ENCODE measurements at regions of chr9 and their contacts with region 1.

Region 1: DNA sequence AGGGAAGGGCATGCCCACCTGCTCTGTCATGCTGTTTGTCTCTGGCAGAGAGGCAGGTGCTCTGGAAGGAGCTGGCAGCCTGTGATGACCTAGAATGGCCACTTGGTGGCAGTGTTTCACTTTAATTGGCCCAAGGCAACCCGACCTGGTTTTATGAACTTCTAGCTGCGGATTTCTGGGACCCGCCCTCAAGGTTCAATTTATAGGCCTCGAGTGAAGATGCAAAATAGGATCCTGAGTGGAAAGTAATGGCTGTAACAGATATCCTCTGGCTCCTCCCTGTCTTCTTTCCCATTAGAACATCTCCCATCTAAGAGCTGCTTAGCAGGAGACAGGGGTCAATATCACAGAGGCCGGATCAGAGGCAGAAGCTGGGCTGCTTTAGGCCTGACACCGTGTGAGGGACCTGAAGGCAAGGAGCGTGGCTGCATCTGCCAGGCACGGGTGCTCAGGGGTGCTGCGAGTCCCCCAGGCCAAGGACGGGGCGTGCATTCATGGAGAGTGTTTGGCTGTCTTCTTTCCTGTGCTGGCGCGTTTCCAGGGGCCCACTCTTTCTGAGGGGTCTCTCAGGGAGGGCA is 56.7 kb upstream of the SLC28A3 start:
- DNase-seq: peak; percentile 69 to 74
- H3K4me3 ChIP-seq: no peak overlapping the region
- H3K27ac ChIP-seq: no peak overlapping the region
- H3K4me1 ChIP-seq: no peaks in the 10 kb centered on the region
- H3K27me3 ChIP-seq: no peaks in the 10 kb centered on the region
- CTCF ChIP-seq: peak; percentile 73 to 94 (median 89)
- POLR2A ChIP-seq: no peak

Region 2: DNA sequence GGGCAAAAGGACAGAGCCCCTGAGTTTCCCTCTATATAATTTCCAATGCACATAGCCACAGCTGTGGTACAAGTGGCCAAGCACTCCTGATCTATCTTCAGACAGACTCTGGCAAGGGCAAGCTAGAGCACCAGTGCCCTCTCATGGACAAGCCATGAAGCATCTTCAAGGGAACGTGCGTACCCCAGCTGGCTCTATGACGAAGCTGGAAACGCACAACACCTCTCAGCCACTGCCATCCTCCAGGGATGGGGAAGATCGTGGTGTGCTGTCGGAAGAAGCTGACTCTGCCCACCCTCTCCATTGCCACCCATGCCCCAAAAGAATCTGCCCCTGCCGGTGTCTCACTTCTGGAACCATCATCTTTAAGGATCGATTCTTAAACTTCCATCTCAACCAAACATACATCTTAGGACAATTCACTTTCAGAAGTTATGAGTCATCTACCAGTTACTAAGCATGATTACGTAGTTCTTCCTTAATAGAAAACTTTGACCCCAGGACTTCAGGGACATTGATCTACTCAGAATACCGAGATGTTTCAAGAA is 861.7 kb after region 1 on chr9:
- intact Hi-C with region 1: loop called (anchors 5 kb)
- DNase-seq: peak; percentile 57 to 69
- H3K4me3 ChIP-seq: no peak overlapping the region
- H3K27ac ChIP-seq: no peak overlapping the region
- H3K4me1 ChIP-seq: no peaks in the 10 kb centered on the region
- H3K27me3 ChIP-seq: no peaks in the 10 kb centered on the region
- CTCF ChIP-seq: peak in 5 of 6 experiments; percentile 14 to 77 (median 70)
- POLR2A ChIP-seq: no peak

Region 3: DNA sequence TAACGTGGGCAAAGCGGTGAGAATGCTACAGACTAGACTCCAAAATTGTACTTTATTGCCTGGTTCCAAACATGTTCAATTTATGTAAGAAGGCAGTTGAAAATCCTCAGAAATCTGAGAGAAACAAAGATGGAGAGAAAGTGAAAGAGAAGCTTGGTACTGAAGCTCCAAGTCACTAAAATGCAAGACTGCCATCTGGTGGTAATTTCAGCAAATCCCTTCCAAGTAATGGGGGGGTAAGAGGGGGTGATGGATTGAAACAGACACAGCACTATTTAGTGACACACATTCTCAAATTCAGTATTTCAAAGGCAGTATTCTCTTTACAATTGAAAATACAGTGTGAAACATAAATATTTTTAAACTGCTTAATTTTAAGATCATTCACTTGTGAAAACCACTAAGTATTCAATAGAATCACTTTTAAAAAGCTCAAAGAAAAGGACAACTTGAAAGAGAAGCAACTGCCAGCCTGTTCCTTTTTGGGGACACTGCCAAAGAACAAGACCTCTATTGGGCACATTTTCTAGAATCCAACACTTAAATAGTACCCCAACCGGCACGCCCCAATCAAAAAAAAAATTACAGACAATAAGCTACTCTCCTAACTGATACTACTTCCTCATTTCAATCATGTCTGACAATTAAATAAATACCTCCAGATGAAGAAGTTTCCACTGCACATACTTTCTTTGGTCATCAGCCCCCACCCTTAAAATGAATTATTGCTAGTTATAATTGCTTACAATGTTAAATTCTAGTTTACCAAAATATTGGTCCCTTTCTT is 1213.0 kb after region 1 on chr9:
- intact Hi-C with region 1: loop called (anchors 10 kb)
- DNase-seq: peak; percentile 18 to 20
- H3K4me3 ChIP-seq: no peak overlapping the region
- H3K27ac ChIP-seq: no peak overlapping the region
- H3K4me1 ChIP-seq: peaks cover 0 to 3% of the 10 kb centered on the region in 2 donors
- H3K27me3 ChIP-seq: no peaks in the 10 kb centered on the region
- CTCF ChIP-seq: peak; percentile 60 to 85 (median 72)
- POLR2A ChIP-seq: no peak

Measured in thyroid gland (tissue), 4 donors.